ENCODE measurements at regions of chr10 and their contacts with region 1.

Region 1: GRCh38 chr10:60123172-60124067 is 217.1 kb upstream of the CCDC6 start:
- DNase-seq: no peak
- ATAC-seq: no peak
- H3K4me3 Mint-ChIP-seq: no peak overlapping the region
- H3K27ac Mint-ChIP-seq: no peak overlapping the region
- H3K4me1 Mint-ChIP-seq: no peaks in the 10 kb centered on the region
- H3K27me3 Mint-ChIP-seq: no peaks in the 10 kb centered on the region
- CTCF ChIP-seq: no peak

Region 2: GRCh38 chr10:60139790-60140566 is 16.6 kb after region 1 on chr10:
- CTCF ChIA-PET with region 1: no interaction called
- POLR2A ChIA-PET with region 1: interaction called, 10 read pairs
- intact Hi-C with region 1: no loop called
- DNase-seq: no peak
- ATAC-seq: no peak
- H3K4me3 Mint-ChIP-seq: no peak overlapping the region
- H3K27ac Mint-ChIP-seq: no peak overlapping the region
- H3K4me1 Mint-ChIP-seq: peaks cover 16% of the 10 kb centered on the region
- H3K27me3 Mint-ChIP-seq: no peaks in the 10 kb centered on the region
- CTCF ChIP-seq: no peak

Measured in activated B cell treated with CpG ODN at 0.5 μM for 24 hours (primary cell).